ENCODE measurements at regions of chr2 and their contacts with region 1.

Region 1: DNA sequence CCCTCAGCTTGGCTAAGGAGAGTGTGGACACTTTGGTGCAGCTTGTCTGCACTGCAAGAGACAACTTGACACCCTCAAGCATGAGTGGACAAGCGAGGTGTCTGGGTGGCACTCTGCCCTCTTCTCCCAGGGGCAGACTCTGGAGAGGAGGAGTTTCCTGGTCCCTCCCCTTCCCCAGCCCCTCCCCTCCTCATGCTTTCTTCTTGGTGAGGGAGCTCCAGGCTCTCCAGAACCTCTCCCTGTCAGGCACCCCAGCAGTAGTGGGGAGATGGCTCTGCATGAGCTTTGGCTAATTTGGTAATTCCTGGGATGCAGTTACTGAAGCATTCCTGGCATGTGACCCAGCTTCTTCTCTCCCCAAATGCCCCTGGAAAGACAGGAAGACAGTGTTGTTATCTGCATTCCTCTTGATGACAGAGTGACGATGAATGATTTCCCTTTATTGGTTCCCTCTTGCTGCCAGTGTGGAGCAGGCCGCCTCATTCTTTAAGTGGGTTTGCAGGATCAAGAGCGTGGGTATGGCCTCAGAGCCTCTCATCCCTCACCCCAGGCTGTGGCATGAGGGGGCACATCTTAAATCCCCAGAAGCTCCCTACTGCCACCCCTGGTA is 89.2 kb downstream of the STPG4 start:
- DNase-seq: peak; percentile 89
- ATAC-seq: peak; percentile 75
- H3K4me3 ChIP-seq: no peak overlapping the region
- H3K27ac ChIP-seq: peak overlapping the region; percentile 89
- H3K4me1 ChIP-seq: peaks cover 53% of the 10 kb centered on the region
- H3K27me3 ChIP-seq: no peaks in the 10 kb centered on the region
- CTCF ChIP-seq: no peak
- POLR2A ChIP-seq: peak; percentile 35; the same call in 1 of the 2 replicates
- RAD21 ChIP-seq: 0 out of 2 replicates have a peak, but pooled peaks have one; percentile 10

Region 2: GRCh38 chr2:46893269-46893945 is 172.5 kb before region 1 on chr2:
- CTCF ChIA-PET with region 1: no interaction called
- POLR2A ChIA-PET with region 1: no interaction called
- dilution Hi-C with region 1: no loop called
- in situ Hi-C with region 1: no loop called
- intact Hi-C with region 1: no loop called
- DNase-seq: peak; percentile 63
- ATAC-seq: no peak
- H3K4me3 ChIP-seq: no peak overlapping the region
- H3K27ac ChIP-seq: no peak overlapping the region
- H3K4me1 ChIP-seq: peaks cover 5% of the 10 kb centered on the region
- H3K27me3 ChIP-seq: no peaks in the 10 kb centered on the region
- CTCF ChIP-seq: no peak
- POLR2A ChIP-seq: no peak
- RAD21 ChIP-seq: no peak

Region 3: GRCh38 chr2:47043142-47043890 is 22.6 kb before region 1 on chr2:
- CTCF ChIA-PET with region 1: interaction called, 3 read pairs
- POLR2A ChIA-PET with region 1: interaction called, 23 read pairs
- dilution Hi-C with region 1: no loop called
- in situ Hi-C with region 1: no loop called
- intact Hi-C with region 1: no loop called
- DNase-seq: peak; percentile 95
- ATAC-seq: peak; percentile 84
- H3K4me3 ChIP-seq: peak overlapping the region; percentile 1; the same call in 1 of the 2 replicates
- H3K27ac ChIP-seq: peak overlapping the region; percentile 94
- H3K4me1 ChIP-seq: peaks cover 39% of the 10 kb centered on the region
- H3K27me3 ChIP-seq: no peaks in the 10 kb centered on the region
- CTCF ChIP-seq: no peak
- POLR2A ChIP-seq: peak; percentile 50; the same call in 1 of the 2 replicates
- RAD21 ChIP-seq: peak; percentile 4; the same call in 1 of the 2 replicates

Region 4: DNA sequence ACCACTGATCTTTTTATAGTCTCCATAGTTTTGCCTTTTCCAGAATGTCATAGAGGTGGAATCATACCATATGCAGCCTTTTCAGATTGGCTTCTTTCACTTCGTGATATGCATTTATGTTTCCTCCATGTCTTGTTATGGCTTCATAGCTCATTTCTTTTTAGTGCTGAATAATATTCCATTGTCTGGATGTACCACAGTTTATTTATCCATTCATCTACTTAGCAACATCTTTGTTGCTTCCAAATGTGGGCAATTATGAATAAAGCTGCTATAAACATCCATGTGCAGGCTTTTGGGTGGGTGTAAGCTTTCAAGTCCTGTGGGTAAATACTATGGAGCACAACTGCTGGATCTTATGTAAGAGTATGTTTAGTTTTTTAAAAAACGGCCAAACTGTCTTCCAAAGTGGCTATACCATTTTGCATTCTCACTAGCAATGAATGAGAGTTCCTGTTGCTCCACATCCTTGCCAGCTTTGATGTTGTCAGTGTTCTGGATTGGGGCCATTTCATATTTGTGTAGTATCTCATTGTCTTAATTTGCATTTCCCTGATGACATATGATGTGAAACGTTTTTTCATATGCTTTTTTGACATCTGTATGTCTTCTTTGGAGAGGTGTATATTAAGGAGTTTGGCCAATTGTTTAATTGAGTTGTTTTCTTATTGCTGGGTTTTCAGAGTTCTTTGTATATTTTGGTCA is 68.7 kb after region 1 on chr2:
- CTCF ChIA-PET with region 1: no interaction called
- POLR2A ChIA-PET with region 1: interaction called, 20 read pairs
- dilution Hi-C with region 1: no loop called
- in situ Hi-C with region 1: no loop called
- intact Hi-C with region 1: no loop called
- DNase-seq: no peak
- ATAC-seq: no peak
- H3K4me3 ChIP-seq: no peak overlapping the region
- H3K27ac ChIP-seq: no peak overlapping the region
- H3K4me1 ChIP-seq: no peaks in the 10 kb centered on the region
- H3K27me3 ChIP-seq: no peaks in the 10 kb centered on the region
- CTCF ChIP-seq: no peak
- POLR2A ChIP-seq: no peak
- RAD21 ChIP-seq: no peak

Region 5: GRCh38 chr2:47225061-47225859 is 159.4 kb after region 1 on chr2:
- CTCF ChIA-PET with region 1: no interaction called
- POLR2A ChIA-PET with region 1: interaction called, 16 read pairs
- dilution Hi-C with region 1: no loop called
- in situ Hi-C with region 1: no loop called
- intact Hi-C with region 1: no loop called
- DNase-seq: peak; percentile 88
- ATAC-seq: peak; percentile 77
- H3K4me3 ChIP-seq: no peak overlapping the region
- H3K27ac ChIP-seq: peak overlapping the region; percentile 36
- H3K4me1 ChIP-seq: peaks cover 28% of the 10 kb centered on the region
- H3K27me3 ChIP-seq: no peaks in the 10 kb centered on the region
- CTCF ChIP-seq: no peak
- POLR2A ChIP-seq: no peak
- RAD21 ChIP-seq: no peak

Region 6: GRCh38 chr2:47295131-47295980 is 229.5 kb after region 1 on chr2:
- CTCF ChIA-PET with region 1: no interaction called
- POLR2A ChIA-PET with region 1: interaction called, 11 read pairs
- dilution Hi-C with region 1: no loop called
- in situ Hi-C with region 1: no loop called
- intact Hi-C with region 1: no loop called
- DNase-seq: no peak
- ATAC-seq: no peak; the same call in 1 of the 2 replicates
- H3K4me3 ChIP-seq: no peak overlapping the region
- H3K27ac ChIP-seq: no peak overlapping the region
- H3K4me1 ChIP-seq: no peaks in the 10 kb centered on the region
- H3K27me3 ChIP-seq: no peaks in the 10 kb centered on the region
- CTCF ChIP-seq: no peak
- POLR2A ChIP-seq: no peak
- RAD21 ChIP-seq: no peak